ENCODE measurements at regions of chr10 and their contacts with region 1.

Region 1: GRCh38 chr10:119199231-119199992 is 8.0 kb upstream of the GRK5 start:
- DNase-seq: peak; percentile 77
- ATAC-seq: peak; percentile 92
- H3K4me3 ChIP-seq: no peak overlapping the region
- H3K27ac ChIP-seq: no peak overlapping the region
- H3K4me1 ChIP-seq: peaks cover 0 to 21% of the 10 kb centered on the region in 2 experiments; a peak in 2 of 4 replicates
- H3K27me3 ChIP-seq: no peaks in the 10 kb centered on the region
- CTCF ChIP-seq: peak; percentile 87 to 93 (median 90)
- POLR2A ChIP-seq: no peak
- RAD21 ChIP-seq: peak; percentile 99

Region 2: DNA sequence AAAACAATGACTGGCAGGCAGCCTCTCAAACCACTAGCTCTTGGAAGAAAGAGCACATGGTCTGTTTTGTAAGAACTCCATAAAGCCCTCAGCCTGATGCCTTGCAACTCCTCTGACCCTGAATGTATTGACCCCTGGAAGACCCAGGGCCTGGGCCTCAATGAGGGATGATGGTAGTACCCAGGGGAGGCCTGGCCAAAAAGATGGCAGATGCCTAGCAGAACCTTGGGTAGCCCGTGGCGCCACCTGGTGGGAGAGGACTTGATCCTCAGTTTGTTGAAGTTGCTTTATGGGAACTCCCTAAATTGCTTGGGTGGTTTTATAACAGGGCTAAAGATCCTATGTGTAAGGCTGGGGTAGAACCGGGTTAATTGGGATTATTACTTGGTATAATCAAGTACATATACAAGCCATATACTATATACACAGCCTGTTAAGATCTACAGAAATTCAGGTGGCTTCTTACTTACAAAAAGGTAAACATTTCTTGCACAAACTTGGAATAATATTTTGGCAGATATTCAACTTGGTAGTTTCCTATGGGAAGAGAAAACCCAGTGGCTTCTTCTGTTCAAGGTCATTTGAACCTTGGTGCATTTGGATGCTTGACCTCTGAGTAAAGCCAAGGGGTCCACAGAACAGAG is 348.9 kb before region 1 on chr10:
- CTCF ChIA-PET with region 1: no interaction called
- POLR2A ChIA-PET with region 1: no interaction called
- RAD21 ChIA-PET with region 1: no interaction called
- intact Hi-C with region 1: no loop called
- DNase-seq: peak; percentile 88
- ATAC-seq: peak; percentile 97
- H3K4me3 ChIP-seq: no peak overlapping the region
- H3K27ac ChIP-seq: no peak overlapping the region
- H3K4me1 ChIP-seq: peaks cover 0 to 6% of the 10 kb centered on the region in 2 experiments; a peak in 2 of 4 replicates
- H3K27me3 ChIP-seq: no peaks in the 10 kb centered on the region
- CTCF ChIP-seq: peak; percentile 95 to 99 (median 98)
- POLR2A ChIP-seq: no peak
- RAD21 ChIP-seq: peak; percentile 97

Region 3: DNA sequence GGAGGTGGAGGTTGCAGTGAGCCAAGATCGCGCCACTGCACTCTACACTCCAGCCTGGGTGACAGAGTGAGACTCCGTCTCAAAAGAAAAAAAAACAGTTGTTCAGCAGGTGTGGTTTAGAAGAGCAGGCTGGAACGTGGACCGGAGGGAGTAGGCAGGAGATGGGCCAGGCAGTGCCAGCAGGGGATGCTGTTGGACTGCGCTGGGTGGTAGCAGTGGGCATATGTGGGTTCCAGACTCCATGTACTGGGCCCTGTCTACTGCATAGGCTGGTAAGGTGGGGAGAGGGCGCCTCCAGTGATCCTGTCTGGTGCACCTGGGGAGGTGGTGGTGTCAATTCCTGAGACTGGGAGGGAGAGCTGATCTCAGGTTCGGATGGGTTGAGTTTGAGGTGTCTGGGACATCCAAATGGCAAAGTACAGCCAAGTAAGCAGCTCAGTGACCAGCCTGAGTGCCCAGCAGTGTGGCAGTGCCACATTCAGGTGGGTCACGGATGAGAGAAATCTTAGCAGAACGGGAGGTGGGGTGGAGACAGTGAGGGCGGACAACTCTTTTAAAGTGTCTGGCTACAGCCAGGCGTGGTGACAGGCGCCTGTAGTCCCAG is 59.8 kb before region 1 on chr10:
- CTCF ChIA-PET with region 1: interaction called, 10 read pairs
- POLR2A ChIA-PET with region 1: no interaction called
- RAD21 ChIA-PET with region 1: interaction called in 1 of 2 experiments, 3 read pairs
- intact Hi-C with region 1: no loop called
- DNase-seq: peak; percentile 16
- ATAC-seq: peak; percentile 83
- H3K4me3 ChIP-seq: no peak overlapping the region
- H3K27ac ChIP-seq: no peak overlapping the region
- H3K4me1 ChIP-seq: no peaks in the 10 kb centered on the region
- H3K27me3 ChIP-seq: no peaks in the 10 kb centered on the region
- CTCF ChIP-seq: peak; percentile 53 to 82 (median 68); a peak in 5 of 6 replicates
- POLR2A ChIP-seq: no peak
- RAD21 ChIP-seq: peak; percentile 85

Region 4: DNA sequence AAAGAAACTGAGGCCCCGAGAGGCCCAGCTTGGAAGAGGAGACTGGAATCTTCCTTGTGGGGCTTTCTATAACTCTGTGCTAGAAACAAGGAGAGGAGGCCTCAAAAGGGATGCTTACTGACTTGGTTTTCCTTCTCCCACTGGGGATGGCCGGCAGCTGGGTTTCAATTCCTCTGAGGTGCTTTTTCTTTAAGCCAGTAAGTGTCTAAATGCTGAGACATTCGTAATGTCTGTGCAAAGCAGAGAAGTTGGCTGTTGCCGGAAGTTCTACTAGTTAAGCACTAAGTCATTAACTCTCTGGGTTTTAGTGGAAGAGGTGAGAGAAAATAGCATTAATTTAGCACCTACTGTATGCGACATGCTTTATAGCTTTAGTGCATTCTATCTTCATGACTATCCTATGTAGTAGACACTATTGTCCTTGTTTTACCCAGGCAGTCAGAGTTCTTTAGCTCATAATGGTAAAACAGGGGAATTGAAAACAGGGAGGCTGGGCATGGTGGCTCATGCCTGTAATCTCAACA is 207.9 kb after region 1 on chr10:
- CTCF ChIA-PET with region 1: interaction called, 11 read pairs
- POLR2A ChIA-PET with region 1: no interaction called
- RAD21 ChIA-PET with region 1: no interaction called
- intact Hi-C with region 1: no loop called
- DNase-seq: no peak
- ATAC-seq: no peak
- H3K4me3 ChIP-seq: no peak overlapping the region
- H3K27ac ChIP-seq: no peak overlapping the region
- H3K4me1 ChIP-seq: peaks cover 0 to 3% of the 10 kb centered on the region in 2 experiments; a peak in 3 of 4 replicates
- H3K27me3 ChIP-seq: no peaks in the 10 kb centered on the region
- CTCF ChIP-seq: no peak
- POLR2A ChIP-seq: no peak
- RAD21 ChIP-seq: no peak

Region 5: GRCh38 chr10:119421887-119422681 is 222.7 kb after region 1 on chr10:
- CTCF ChIA-PET with region 1: interaction called, 56 read pairs
- POLR2A ChIA-PET with region 1: no interaction called
- RAD21 ChIA-PET with region 1: interaction called in 1 of 2 experiments, 6 read pairs
- intact Hi-C with region 1: loop called (anchors 1 kb)
- DNase-seq: no peak
- ATAC-seq: no peak
- H3K4me3 ChIP-seq: no peak overlapping the region
- H3K27ac ChIP-seq: no peak overlapping the region
- H3K4me1 ChIP-seq: peaks cover 0 to 4% of the 10 kb centered on the region in 2 experiments; a peak in 1 of 4 replicates
- H3K27me3 ChIP-seq: no peaks in the 10 kb centered on the region
- CTCF ChIP-seq: no peak
- POLR2A ChIP-seq: no peak
- RAD21 ChIP-seq: no peak

Region 6: GRCh38 chr10:119489991-119490326 is 290.5 kb after region 1 on chr10:
- CTCF ChIA-PET with region 1: interaction called, 50 read pairs
- POLR2A ChIA-PET with region 1: interaction called, 4 read pairs
- RAD21 ChIA-PET with region 1: interaction called, 6 to 7 read pairs
- intact Hi-C with region 1: loop called (anchors 2 kb)
- DNase-seq: no peak
- ATAC-seq: peak; percentile 9; the same call in 1 of the 2 replicates
- H3K4me3 ChIP-seq: peak overlapping the region in 1 of 2 experiments; percentile 56; a peak in 2 of 4 replicates
- H3K27ac ChIP-seq: no peak overlapping the region
- H3K4me1 ChIP-seq: peaks cover 0 to 10% of the 10 kb centered on the region in 2 experiments; a peak in 3 of 4 replicates
- H3K27me3 ChIP-seq: no peaks in the 10 kb centered on the region
- CTCF ChIP-seq: no peak
- POLR2A ChIP-seq: no peak
- RAD21 ChIP-seq: no peak

Region 7: GRCh38 chr10:119602241-119603095 is 403.1 kb after region 1 on chr10:
- CTCF ChIA-PET with region 1: interaction called, 10 read pairs
- POLR2A ChIA-PET with region 1: no interaction called
- RAD21 ChIA-PET with region 1: interaction called, 3 to 8 read pairs
- intact Hi-C with region 1: no loop called
- DNase-seq: peak; percentile 51
- ATAC-seq: peak; percentile 97
- H3K4me3 ChIP-seq: no peak overlapping the region
- H3K27ac ChIP-seq: no peak overlapping the region
- H3K4me1 ChIP-seq: peaks cover 5 to 6% of the 10 kb centered on the region in 2 experiments; a peak in 3 of 4 replicates
- H3K27me3 ChIP-seq: no peaks in the 10 kb centered on the region
- CTCF ChIP-seq: peak in 2 of 3 experiments; percentile 89 to 93; a peak in 4 of 6 replicates
- POLR2A ChIP-seq: no peak
- RAD21 ChIP-seq: no peak

Region 8: GRCh38 chr10:119859420-119860258 is 660.2 kb after region 1 on chr10:
- CTCF ChIA-PET with region 1: interaction called, 6 read pairs
- POLR2A ChIA-PET with region 1: no interaction called
- RAD21 ChIA-PET with region 1: no interaction called
- intact Hi-C with region 1: loop called (anchors 10 kb)
- DNase-seq: peak; percentile 59
- ATAC-seq: peak; percentile 69
- H3K4me3 ChIP-seq: no peak overlapping the region
- H3K27ac ChIP-seq: no peak overlapping the region
- H3K4me1 ChIP-seq: no peaks in the 10 kb centered on the region
- H3K27me3 ChIP-seq: no peaks in the 10 kb centered on the region
- CTCF ChIP-seq: peak; percentile 60 to 93 (median 91)
- POLR2A ChIP-seq: no peak
- RAD21 ChIP-seq: peak; percentile 93

Measured in HCT116 (cell line).